ENCODE measurements at regions of chr18 and their contacts with region 1.

Region 1: DNA sequence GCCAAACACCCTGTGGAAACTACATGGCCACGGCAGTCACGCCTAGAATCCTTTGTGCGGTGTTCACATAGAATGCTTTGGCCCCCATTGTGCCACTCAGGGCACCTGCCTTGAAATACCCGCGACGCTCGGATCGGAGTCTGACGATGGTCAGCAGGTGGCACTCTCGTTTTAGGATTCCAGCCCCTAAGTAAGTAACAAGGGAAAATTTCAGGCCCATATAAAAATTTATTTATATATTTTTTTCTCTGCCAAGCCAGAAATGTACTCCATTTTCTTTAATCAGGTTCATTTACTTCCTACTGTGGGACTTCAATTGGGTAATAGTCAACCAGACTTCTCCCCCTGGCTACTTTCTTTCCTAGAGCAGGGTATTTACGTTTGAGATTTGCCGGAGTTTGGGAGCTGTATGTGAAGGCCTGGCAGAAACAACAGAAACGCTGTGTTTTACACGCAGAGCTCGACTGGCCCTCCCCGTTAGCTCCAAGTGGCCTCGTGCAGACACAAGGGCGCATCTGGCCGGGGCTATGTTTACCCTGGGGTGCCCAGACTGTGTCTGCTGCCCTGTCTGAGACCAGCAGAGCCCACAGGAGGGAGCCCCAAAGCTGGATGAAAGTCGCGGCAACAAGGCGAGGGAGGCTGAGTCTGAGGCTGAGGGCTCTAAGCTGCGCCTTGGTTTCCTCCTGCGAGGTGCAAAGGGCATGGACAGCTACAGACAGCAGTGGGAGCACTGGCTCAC is 41.6 kb downstream of the LRRC30 start:
- DNase-seq: peak; percentile 66 to 69
- ATAC-seq: peak; percentile 66 to 94 (median 88)
- H3K4me3 ChIP-seq: peak overlapping the region in 8 of 10 donors; percentile 15 to 39 (median 34)
- H3K27ac ChIP-seq: peak overlapping the region; percentile 61 to 87 (median 77)
- H3K4me1 ChIP-seq: peaks cover 7 to 26% (median 21%) of the 10 kb centered on the region in 9 donors
- H3K27me3 ChIP-seq: no peaks in the 10 kb centered on the region
- CTCF ChIP-seq: peak; percentile 39 to 74 (median 59)

Region 2: DNA sequence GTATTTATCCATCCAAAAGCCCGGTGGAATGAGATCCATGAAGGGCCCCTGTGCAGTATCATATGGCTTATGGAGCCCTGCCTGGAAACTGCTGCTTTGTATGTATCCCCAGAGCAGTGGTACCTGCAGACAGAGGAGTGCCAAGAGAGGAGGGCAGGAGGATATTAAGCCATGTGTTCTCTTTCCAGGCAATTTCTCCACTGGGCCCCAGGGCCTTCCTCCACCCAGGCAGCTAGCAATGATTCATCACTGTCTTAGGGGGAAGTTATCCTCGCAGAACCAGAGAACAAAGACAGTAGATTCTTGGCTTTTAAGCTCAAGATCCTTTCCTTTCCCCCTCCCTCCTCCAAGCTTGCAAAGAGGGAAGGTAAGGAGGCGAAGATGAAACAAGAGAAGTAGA is 56.5 kb after region 1 on chr18:
- intact Hi-C with region 1: loop called in 1 of 10 experiments (anchors 1 kb)
- DNase-seq: no peak
- ATAC-seq: no peak
- H3K4me3 ChIP-seq: no peak overlapping the region
- H3K27ac ChIP-seq: no peak overlapping the region
- H3K4me1 ChIP-seq: peaks cover 0 to 18% (median 8%) of the 10 kb centered on the region in 9 donors
- H3K27me3 ChIP-seq: no peaks in the 10 kb centered on the region
- CTCF ChIP-seq: no peak

Region 3: DNA sequence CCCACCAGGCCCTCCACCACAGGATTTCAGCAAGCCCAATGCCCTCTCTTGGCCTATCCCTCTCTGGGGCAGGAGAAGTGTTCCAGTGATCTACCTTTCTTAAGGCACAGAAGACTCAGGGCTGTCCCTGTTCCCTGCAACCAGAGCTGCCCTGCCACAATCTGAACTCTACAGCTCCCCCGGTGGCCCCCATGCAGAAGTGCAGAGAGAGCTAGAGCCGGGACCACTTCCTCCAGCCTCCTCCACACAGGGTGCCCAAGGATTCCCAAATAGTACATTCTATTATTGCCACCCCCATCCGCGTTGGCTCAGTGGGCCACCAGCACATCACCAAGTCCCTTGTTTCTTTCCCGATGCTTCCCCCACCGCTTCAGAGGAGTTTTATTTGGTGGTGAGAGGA is 179.9 kb after region 1 on chr18:
- intact Hi-C with region 1: loop called in 6 of 10 experiments (anchors 5 to 10 kb)
- DNase-seq: peak; percentile 27 to 31
- ATAC-seq: peak in 7 of 8 donors; percentile 53 to 87 (median 71)
- H3K4me3 ChIP-seq: no peak overlapping the region
- H3K27ac ChIP-seq: no peak overlapping the region
- H3K4me1 ChIP-seq: peaks cover 0 to 17% (median 0%) of the 10 kb centered on the region in 9 donors
- H3K27me3 ChIP-seq: no peaks in the 10 kb centered on the region
- CTCF ChIP-seq: peak; percentile 45 to 74 (median 65)

Region 4: DNA sequence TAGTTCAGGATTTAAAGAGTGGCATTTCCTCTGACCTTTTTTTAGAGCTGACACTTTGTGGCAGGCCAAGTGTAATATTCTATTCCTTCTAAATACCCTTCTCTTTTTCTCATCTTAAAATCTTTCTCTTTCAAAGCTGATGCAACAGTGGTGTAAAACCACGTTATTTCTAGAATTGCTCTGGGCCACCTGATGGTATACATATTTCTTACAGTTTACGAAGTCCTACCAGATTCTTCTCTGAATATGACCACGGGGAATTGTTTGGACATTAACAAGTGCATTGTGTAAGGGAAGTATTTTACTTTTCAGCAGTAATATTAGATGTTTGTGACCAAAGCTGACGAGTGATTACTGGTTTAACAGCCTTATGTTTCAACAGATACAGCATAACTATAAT is 404.5 kb after region 1 on chr18:
- intact Hi-C with region 1: loop called in 1 of 10 experiments (anchors 10 kb)
- DNase-seq: no peak
- ATAC-seq: no peak
- H3K4me3 ChIP-seq: no peak overlapping the region
- H3K27ac ChIP-seq: peak overlapping the region in 4 of 10 donors; percentile 10 to 52 (median 38)
- H3K4me1 ChIP-seq: peaks cover 6 to 95% (median 76%) of the 10 kb centered on the region in 9 donors
- H3K27me3 ChIP-seq: no peaks in the 10 kb centered on the region
- CTCF ChIP-seq: no peak

Region 5: DNA sequence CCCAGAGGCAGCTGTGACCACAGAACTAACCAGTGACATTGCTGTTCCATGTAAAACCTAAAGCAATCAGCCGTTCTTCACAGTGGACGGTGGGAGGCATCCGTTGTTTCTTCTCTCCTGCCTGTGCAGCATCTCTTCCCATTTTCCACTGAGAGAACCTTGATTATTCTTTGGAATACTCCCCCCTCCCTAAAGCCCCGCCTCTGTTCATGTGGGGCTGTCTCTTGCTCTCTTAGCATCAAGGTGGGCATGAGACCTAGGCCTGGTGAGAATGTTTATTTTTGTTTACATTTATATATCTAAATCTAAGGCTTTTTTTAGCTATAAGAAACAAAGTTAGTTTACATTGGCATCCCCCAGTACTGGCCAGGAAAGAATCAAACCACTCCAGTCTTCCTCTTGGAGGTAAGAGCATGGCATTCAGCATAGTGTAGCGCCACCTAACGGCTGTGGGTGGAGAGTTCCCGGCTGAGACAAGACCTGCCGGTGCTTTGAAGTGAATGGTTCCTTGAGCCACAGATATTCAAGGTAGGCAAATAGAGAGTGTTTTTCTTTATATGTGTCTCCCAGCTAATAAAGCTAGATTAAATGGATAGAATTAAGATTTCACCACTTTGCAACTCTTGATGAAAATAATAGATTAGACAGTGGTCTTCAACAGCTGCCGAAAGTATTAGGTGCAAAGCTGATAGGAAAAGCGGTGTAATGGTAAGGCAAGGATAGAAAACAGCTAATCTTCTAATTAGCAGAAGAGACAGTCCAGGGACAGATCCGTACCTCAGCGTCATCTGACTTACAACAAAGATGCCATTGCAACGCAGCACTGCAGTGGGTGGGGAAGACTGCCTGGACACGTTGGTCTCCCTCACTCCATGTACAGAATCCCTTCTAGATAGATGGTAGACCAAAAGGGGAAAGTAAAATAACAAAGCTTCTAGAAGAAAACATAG is 1117.2 kb after region 1 on chr18:
- intact Hi-C with region 1: loop called in 5 of 10 experiments (anchors 5 to 10 kb)
- DNase-seq: peak; percentile 59
- ATAC-seq: peak; percentile 81 to 90 (median 84)
- H3K4me3 ChIP-seq: no peak overlapping the region
- H3K27ac ChIP-seq: no peak overlapping the region
- H3K4me1 ChIP-seq: peaks cover 0 to 7% (median 0%) of the 10 kb centered on the region in 9 donors
- H3K27me3 ChIP-seq: no peaks in the 10 kb centered on the region
- CTCF ChIP-seq: peak; percentile 48 to 86 (median 79)

Measured in heart right ventricle (tissue), 16 donors.